ENCODE measurements at regions of chr5 and their contacts with region 1.

Region 1: DNA sequence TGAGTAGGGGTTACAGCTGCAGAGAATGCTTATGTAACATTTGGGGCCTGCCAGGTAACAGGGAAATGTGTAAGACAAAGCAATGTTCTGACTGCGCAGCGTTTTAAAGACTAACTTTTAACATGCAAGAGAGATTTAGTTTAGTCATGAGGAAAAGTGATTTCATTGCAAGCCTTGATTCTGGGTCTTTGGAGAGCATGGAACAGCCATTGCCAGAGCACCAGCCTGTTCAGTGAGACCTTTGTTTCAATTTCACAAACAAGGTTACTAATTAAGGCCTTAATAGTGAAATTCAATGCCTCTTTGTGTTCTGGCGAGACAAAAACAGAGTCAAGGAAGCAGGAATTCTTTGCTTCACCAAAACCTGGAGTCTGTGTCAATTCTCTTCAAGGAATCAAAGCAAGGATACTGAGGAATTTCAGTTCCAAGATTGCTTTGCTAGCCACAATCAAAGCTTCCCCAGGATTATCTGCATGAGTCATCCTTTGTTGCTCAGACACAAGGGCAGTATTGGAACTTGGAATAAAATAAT is 14.4 kb downstream of the CKMT2 start:
- DNase-seq: peak; percentile 24
- H3K4me3 ChIP-seq: no peak overlapping the region
- H3K27ac ChIP-seq: no peak overlapping the region
- H3K4me1 ChIP-seq: peaks cover 18% of the 10 kb centered on the region
- H3K27me3 ChIP-seq: no peaks in the 10 kb centered on the region
- CTCF ChIP-seq: no peak

Region 2: GRCh38 chr5:80703747-80704146 is 543.8 kb before region 1 on chr5:
- CTCF ChIA-PET with region 1: interaction called, 15 read pairs
- dilution Hi-C with region 1: no loop called
- in situ Hi-C with region 1: no loop called
- intact Hi-C with region 1: no loop called
- DNase-seq: no peak
- H3K4me3 ChIP-seq: no peak overlapping the region
- H3K27ac ChIP-seq: no peak overlapping the region
- H3K4me1 ChIP-seq: peaks cover 3% of the 10 kb centered on the region
- H3K27me3 ChIP-seq: no peaks in the 10 kb centered on the region
- CTCF ChIP-seq: no peak

Measured in mammary epithelial cell (primary cell).